CD4-positive, alpha-beta memory T cell (primary cell): ENCODE measurements at regions of chr2 and their contacts with region 1.

Region 1: GRCh38 chr2:197113275-197113711 is 186.8 kb upstream of the PGAP1 start:
- DNase-seq: peak in 4 of 5 donors; percentile 38 to 49 (median 44)
- H3K4me3 ChIP-seq: no peak overlapping the region
- H3K4me3 Mint-ChIP-seq: no peak overlapping the region
- H3K27ac ChIP-seq: no peak overlapping the region
- H3K27ac Mint-ChIP-seq: peak overlapping the region; percentile 30 to 91 (median 75)
- H3K4me1 ChIP-seq: peaks cover 4% of the 10 kb centered on the region
- H3K4me1 Mint-ChIP-seq: peaks cover 16 to 31% (median 24%) of the 10 kb centered on the region in 4 donors
- H3K27me3 ChIP-seq: no peaks in the 10 kb centered on the region
- H3K27me3 Mint-ChIP-seq: no peaks in the 10 kb centered on the region

Region 2: DNA sequence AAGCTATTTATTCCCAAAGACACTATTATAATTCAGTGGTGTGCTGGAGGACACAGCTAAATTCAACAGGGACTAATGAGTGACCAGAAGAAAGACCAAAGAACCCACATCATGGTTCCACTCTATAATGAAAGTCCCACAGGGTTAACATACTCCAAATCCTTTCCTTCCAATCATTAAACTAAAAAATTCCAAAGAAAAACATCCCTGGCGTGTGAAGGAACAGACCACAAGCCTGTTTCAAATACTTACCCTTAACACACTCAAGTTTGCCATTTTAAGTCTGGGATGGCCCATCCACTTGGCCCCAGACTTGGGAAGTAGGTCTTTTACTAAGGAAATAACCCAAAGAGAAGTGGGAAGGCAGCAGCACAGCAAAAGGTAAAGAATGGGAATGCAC is 623.9 kb before region 1 on chr2:
- CTCF ChIA-PET with region 1: no interaction called
- POLR2A ChIA-PET with region 1: no interaction called
- intact Hi-C with region 1: no loop called
- DNase-seq: no peak
- H3K4me3 ChIP-seq: no peak overlapping the region
- H3K4me3 Mint-ChIP-seq: no peak overlapping the region
- H3K27ac ChIP-seq: no peak overlapping the region
- H3K27ac Mint-ChIP-seq: no peak overlapping the region
- H3K4me1 ChIP-seq: no peaks in the 10 kb centered on the region
- H3K4me1 Mint-ChIP-seq: no peaks in the 10 kb centered on the region
- H3K27me3 ChIP-seq: no peaks in the 10 kb centered on the region
- H3K27me3 Mint-ChIP-seq: peaks cover 11 to 12% of the 10 kb centered on the region in 2 donors

Region 3: DNA sequence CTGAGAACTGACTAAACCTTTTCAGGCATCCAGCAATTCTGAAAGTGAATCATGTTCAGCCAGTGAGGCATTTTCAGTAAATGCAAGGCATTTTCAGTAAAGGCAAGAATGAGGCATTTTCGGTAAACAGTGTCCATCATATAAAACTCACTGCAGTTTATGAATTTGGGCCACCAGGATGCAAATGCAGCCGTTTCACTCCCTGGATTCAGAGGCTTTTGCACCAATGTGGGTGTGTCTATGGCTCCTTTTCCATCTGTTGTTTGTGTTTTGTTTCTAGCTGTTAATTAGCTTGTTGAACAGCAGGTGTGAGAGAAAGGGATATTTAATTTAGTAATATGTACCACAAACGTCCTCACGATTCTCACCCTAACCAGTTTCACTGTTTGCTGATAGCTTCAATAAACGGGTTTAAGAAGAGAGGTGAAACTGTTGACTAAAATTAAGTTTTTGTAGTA is 70.5 kb before region 1 on chr2:
- CTCF ChIA-PET with region 1: no interaction called
- POLR2A ChIA-PET with region 1: no interaction called
- intact Hi-C with region 1: no loop called
- DNase-seq: no peak
- H3K4me3 ChIP-seq: no peak overlapping the region
- H3K4me3 Mint-ChIP-seq: no peak overlapping the region
- H3K27ac ChIP-seq: no peak overlapping the region
- H3K27ac Mint-ChIP-seq: peak overlapping the region in 4 of 7 donors; percentile 30 to 75 (median 62)
- H3K4me1 ChIP-seq: no peaks in the 10 kb centered on the region
- H3K4me1 Mint-ChIP-seq: peaks cover 15 to 27% (median 23%) of the 10 kb centered on the region in 4 donors
- H3K27me3 ChIP-seq: no peaks in the 10 kb centered on the region
- H3K27me3 Mint-ChIP-seq: no peaks in the 10 kb centered on the region

Region 4: GRCh38 chr2:197124639-197125390 is 11.5 kb after region 1 on chr2:
- CTCF ChIA-PET with region 1: interaction called, 52 read pairs
- POLR2A ChIA-PET with region 1: interaction called, 5 read pairs
- intact Hi-C with region 1: loop called (anchors 2 kb)
- DNase-seq: no peak
- H3K4me3 ChIP-seq: no peak overlapping the region
- H3K4me3 Mint-ChIP-seq: no peak overlapping the region
- H3K27ac ChIP-seq: no peak overlapping the region
- H3K27ac Mint-ChIP-seq: peak overlapping the region in 3 of 7 donors; percentile 11 to 75 (median 55)
- H3K4me1 ChIP-seq: peaks cover 48% of the 10 kb centered on the region
- H3K4me1 Mint-ChIP-seq: peaks cover 35 to 73% (median 52%) of the 10 kb centered on the region in 4 donors
- H3K27me3 ChIP-seq: no peaks in the 10 kb centered on the region
- H3K27me3 Mint-ChIP-seq: no peaks in the 10 kb centered on the region

Region 5: GRCh38 chr2:197152451-197153228 is 39.3 kb after region 1 on chr2:
- CTCF ChIA-PET with region 1: interaction called, 24 read pairs
- POLR2A ChIA-PET with region 1: no interaction called
- intact Hi-C with region 1: loop called (anchors 5 kb)
- DNase-seq: peak; percentile 18 to 44 (median 32)
- H3K4me3 ChIP-seq: no peak overlapping the region
- H3K4me3 Mint-ChIP-seq: peak overlapping the region; percentile 13 to 68 (median 62)
- H3K27ac ChIP-seq: no peak overlapping the region
- H3K27ac Mint-ChIP-seq: peak overlapping the region; percentile 15 to 92 (median 72)
- H3K4me1 ChIP-seq: peaks cover 78% of the 10 kb centered on the region
- H3K4me1 Mint-ChIP-seq: peaks cover 62 to 85% (median 77%) of the 10 kb centered on the region in 4 donors
- H3K27me3 ChIP-seq: no peaks in the 10 kb centered on the region
- H3K27me3 Mint-ChIP-seq: no peaks in the 10 kb centered on the region

Region 6: DNA sequence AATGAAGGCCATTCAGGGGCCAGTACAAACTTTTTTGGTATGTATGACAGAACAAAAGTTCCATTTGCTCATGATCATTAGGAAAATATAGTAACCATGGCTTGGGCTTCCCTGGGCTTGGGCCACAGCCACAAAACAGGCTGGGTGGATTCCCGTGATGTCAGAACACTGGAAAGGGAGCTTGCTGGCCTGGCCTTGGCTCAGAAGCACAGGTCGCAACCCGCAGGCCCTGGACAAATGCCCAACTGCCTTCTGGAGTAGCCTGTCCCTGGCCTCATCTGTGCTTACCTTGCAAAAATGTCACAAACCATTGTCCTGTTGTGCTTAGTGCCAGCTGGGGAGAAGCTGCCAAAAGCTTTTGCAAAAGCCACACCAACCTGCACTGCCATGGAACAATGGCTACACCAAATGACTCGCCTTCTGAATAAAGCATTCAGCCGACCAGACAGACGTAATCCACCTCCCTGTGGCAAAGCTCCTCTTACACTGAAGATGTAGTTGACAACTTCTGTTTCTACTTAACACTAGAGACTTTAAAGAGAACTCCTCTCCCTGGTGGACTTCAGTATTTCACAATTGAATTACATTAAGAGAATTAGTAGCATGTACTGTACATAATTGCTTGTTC is 71.8 kb after region 1 on chr2:
- CTCF ChIA-PET with region 1: interaction called, 48 read pairs
- POLR2A ChIA-PET with region 1: no interaction called
- intact Hi-C with region 1: no loop called
- DNase-seq: no peak
- H3K4me3 ChIP-seq: no peak overlapping the region
- H3K4me3 Mint-ChIP-seq: peak overlapping the region in 2 of 8 donors; percentile 7 to 17
- H3K27ac ChIP-seq: no peak overlapping the region
- H3K27ac Mint-ChIP-seq: peak overlapping the region in 4 of 7 donors; percentile 27 to 92 (median 63)
- H3K4me1 ChIP-seq: peaks cover 79% of the 10 kb centered on the region
- H3K4me1 Mint-ChIP-seq: peaks cover 68 to 94% (median 79%) of the 10 kb centered on the region in 4 donors
- H3K27me3 ChIP-seq: no peaks in the 10 kb centered on the region
- H3K27me3 Mint-ChIP-seq: no peaks in the 10 kb centered on the region

Region 7: GRCh38 chr2:197322724-197323720 is 209.7 kb after region 1 on chr2:
- CTCF ChIA-PET with region 1: interaction called, 10 read pairs
- POLR2A ChIA-PET with region 1: no interaction called
- intact Hi-C with region 1: no loop called
- DNase-seq: peak in 3 of 5 donors; percentile 36 to 41 (median 36)
- H3K4me3 ChIP-seq: peak overlapping the region; percentile 44 to 48
- H3K4me3 Mint-ChIP-seq: peak overlapping the region; percentile 49 to 86 (median 76)
- H3K27ac ChIP-seq: peak overlapping the region; percentile 36
- H3K27ac Mint-ChIP-seq: peak overlapping the region; percentile 82 to 97 (median 94)
- H3K4me1 ChIP-seq: peaks cover 67% of the 10 kb centered on the region
- H3K4me1 Mint-ChIP-seq: peaks cover 40 to 71% (median 61%) of the 10 kb centered on the region in 4 donors
- H3K27me3 ChIP-seq: no peaks in the 10 kb centered on the region
- H3K27me3 Mint-ChIP-seq: no peaks in the 10 kb centered on the region

Region 8: DNA sequence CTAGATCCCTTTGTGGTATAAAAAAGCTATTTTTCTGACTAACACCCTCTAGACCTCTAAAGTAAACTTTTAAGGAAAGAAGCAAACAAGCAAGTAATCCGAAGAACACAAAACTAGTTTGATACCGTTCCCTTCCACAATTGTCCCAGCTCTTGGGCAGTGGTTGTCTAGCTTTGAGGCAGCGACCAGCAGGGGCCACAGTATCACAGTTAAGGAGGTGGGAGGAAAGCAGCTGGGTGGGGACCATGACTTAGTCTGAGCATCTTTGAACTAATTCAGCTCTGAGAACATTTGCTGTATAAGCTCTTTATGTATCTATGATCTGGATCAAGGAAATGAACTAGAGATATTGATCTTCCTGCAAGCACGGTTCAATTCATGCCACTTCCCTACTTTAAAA is 270.5 kb after region 1 on chr2:
- CTCF ChIA-PET with region 1: interaction called, 46 read pairs
- POLR2A ChIA-PET with region 1: no interaction called
- intact Hi-C with region 1: no loop called
- DNase-seq: no peak
- H3K4me3 ChIP-seq: no peak overlapping the region
- H3K4me3 Mint-ChIP-seq: no peak overlapping the region
- H3K27ac ChIP-seq: no peak overlapping the region
- H3K27ac Mint-ChIP-seq: no peak overlapping the region
- H3K4me1 ChIP-seq: peaks cover 6% of the 10 kb centered on the region
- H3K4me1 Mint-ChIP-seq: peaks cover 14 to 17% (median 16%) of the 10 kb centered on the region in 4 donors
- H3K27me3 ChIP-seq: no peaks in the 10 kb centered on the region
- H3K27me3 Mint-ChIP-seq: peaks cover 0 to 1% of the 10 kb centered on the region in 2 donors